B cell (primary cell): ENCODE measurements at regions of chr3 and their contacts with region 1.

Region 1: DNA sequence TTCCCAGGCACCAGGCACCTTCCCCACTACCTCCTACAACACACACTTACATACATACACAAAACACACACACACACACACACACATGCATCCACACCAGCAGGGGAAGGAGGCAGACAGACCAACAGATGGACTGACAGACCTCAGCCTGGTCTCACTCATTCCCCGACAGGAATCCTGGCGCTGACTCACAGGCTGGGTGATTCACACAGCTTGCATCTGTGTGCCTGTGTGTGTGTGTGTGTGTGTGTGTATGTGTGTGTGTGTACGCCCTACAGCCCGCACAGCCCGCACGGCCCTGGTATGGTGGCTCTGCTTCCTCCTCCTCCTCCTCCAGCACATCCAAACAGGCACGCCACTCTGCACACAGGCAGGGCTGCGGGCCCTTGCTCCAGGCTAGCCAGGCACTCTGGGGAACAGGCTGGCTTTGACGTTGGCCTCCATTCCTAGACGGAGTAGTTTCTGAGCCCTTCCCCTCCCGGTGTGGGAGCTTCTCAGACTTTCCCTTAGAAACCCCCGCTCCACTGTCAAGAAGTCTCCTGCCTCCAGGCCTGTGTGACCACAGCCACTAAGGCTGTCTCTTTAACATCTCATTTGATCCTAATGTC is 6.3 kb downstream of the CSRNP1 start:
- DNase-seq: peak; percentile 56
- ATAC-seq: peak; percentile 16
- H3K4me3 ChIP-seq: peak overlapping the region; percentile 11 to 61 (median 48)
- H3K4me3 Mint-ChIP-seq: peak overlapping the region; percentile 99
- H3K27ac ChIP-seq: peak overlapping the region; percentile 87 to 98
- H3K27ac Mint-ChIP-seq: peak overlapping the region; percentile 94
- H3K4me1 ChIP-seq: peaks cover 71 to 73% of the 10 kb centered on the region in 2 donors
- H3K4me1 Mint-ChIP-seq: peaks cover 82% of the 10 kb centered on the region
- H3K27me3 ChIP-seq: no peaks in the 10 kb centered on the region
- H3K27me3 Mint-ChIP-seq: no peaks in the 10 kb centered on the region
- CTCF ChIP-seq: no peak

Region 2: DNA sequence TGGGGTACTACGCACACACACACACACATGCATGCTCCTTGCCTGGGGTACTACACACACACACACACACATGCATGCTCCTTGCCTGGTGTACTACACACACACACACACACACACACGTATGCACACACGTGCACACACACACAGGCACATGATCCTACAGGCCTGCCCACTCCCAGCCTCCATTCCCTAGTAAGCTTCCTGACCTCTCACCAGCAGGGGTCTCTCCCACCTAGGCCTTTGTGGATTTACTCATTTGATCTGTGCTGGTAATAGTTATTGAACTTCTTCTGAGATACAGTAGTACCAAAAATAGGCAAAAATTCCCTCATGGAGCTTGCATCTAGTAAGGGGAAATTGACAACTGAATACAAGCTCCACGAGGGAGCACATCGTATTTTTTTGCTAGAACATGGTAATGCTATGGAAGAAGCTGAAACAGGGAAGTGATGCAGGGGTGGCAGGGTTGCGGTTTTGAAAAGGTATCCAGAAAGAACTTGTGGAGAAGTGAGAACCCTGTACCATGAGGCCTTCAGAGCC is 20.5 kb before region 1 on chr3:
- CTCF ChIA-PET with region 1: interaction called, 7 read pairs
- POLR2A ChIA-PET with region 1: interaction called, 4 read pairs
- intact Hi-C with region 1: loop called (anchors 2 kb)
- DNase-seq: peak; percentile 50
- ATAC-seq: peak; percentile 37
- H3K4me3 ChIP-seq: no peak overlapping the region
- H3K4me3 Mint-ChIP-seq: peak overlapping the region; percentile 11
- H3K27ac ChIP-seq: no peak overlapping the region
- H3K27ac Mint-ChIP-seq: peak overlapping the region; percentile 62
- H3K4me1 ChIP-seq: peaks cover 47 to 50% of the 10 kb centered on the region in 2 donors
- H3K4me1 Mint-ChIP-seq: peaks cover 62% of the 10 kb centered on the region
- H3K27me3 ChIP-seq: no peaks in the 10 kb centered on the region
- H3K27me3 Mint-ChIP-seq: no peaks in the 10 kb centered on the region
- CTCF ChIP-seq: no peak